PC-3 (cell line): ENCODE measurements at regions of chr19 and their contacts with region 1.

Region 1: DNA sequence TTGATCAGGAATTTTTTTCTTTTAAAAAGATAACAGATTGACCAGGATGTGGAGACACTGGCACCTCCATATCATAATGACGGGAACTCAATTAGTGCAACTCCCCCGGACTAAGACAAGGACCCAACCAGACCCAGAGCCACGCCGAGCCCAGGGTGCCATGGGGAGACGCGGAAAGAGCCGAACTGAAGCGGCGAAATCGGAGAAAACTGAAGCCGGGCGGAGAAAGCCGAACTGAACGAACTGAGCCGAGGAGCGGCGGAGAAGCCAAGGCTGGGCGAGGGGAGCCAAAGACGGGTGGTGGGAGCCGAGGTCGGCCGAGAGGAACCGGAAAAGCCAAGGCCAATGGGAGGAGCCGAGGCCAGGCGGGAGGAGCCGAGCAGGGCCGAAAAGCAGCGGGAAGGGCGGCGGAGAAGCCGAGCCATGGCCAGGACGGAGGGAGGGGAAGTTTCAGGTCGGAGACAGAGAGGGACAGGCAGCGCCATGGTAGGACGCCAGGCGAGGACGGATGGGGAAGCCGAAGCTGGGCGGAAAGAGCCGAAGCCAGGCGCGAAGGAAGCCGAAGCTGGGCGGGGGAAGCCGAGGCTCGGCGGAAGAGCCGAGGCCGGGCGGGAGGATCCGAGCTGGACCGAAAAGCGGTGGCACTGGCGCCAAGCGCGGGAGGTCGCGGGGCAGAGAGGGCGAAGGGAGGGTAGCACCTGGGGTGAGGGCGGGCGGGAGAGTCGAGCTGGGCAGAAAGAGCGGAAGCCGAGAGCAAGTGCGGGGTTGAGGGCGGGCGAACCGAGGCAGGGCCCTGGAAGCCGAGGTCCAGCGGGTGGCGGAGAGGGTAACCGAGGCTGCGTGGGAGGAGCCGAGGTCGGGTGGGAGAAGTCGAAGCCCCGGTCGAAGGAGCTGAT is 29.4 kb downstream of the ZNF557 start:
- DNase-seq: peak; percentile 95
- ATAC-seq: peak; percentile 90
- H3K4me3 ChIP-seq: peak overlapping the region; percentile 72
- H3K27ac ChIP-seq: peak overlapping the region; percentile 69
- H3K4me1 ChIP-seq: peaks cover 10% of the 10 kb centered on the region; the same call in 1 of the 2 replicates
- H3K27me3 ChIP-seq: no peaks in the 10 kb centered on the region
- CTCF ChIP-seq: no peak

Region 2: GRCh38 chr19:7137120-7137519 is 38.2 kb after region 1 on chr19:
- CTCF ChIA-PET with region 1: interaction called, 3 read pairs
- POLR2A ChIA-PET with region 1: interaction called, 5 read pairs
- intact Hi-C with region 1: loop called (anchors 1 kb)
- DNase-seq: no peak
- ATAC-seq: no peak
- H3K4me3 ChIP-seq: no peak overlapping the region
- H3K27ac ChIP-seq: no peak overlapping the region
- H3K4me1 ChIP-seq: peaks cover 41% of the 10 kb centered on the region
- H3K27me3 ChIP-seq: no peaks in the 10 kb centered on the region
- CTCF ChIP-seq: no peak

Region 3: DNA sequence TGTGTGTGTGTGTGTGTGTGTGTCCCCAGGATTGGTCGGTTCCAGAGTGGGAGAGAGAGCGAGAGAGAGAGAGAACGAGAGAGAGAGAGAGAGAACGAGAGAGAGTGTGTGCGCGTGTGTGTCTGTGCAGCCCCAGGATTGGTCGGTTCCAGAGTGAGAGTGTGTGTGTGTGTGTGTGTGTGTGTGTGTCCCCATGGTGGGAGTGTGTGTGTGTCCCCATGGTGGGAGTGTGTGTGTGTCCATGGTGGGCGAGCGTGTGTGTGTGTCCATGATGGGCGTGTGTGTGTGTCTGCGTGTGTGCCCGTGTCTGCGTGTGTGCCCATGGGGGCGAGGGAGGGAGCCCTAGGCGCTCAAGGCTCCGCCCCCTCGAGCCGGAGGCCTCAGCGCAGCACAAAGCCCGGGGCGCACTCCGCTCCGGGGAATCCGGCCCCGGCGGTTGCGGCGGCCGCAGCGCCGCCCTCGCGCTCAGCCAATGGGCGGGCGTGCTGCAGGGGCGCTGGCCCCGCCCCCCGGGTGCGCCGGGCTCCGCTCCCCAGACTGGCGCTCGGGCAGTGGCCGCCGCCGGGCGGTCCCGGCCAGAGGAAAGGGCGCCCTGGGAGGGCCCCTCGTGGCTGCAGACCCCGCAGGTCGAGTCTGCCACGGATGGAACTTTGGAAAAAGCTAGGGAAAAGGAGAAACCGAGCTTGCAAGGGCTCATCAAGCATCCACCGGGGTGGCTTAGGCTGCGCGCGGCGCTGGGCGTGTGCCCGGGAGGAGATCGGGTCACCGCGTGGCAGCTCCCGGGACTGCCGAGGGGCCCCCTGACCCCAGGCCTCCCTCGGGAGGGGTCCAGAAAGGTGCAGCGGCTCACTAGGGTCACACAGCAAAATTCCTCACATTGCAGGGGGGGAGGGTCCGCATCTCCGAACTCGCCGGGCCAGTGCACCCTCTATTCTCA is 99.1 kb after region 1 on chr19:
- CTCF ChIA-PET with region 1: no interaction called
- POLR2A ChIA-PET with region 1: no interaction called
- intact Hi-C with region 1: loop called (anchors 2 kb)
- DNase-seq: peak; percentile 98
- ATAC-seq: peak; percentile 83
- H3K4me3 ChIP-seq: peak overlapping the region; percentile 88
- H3K27ac ChIP-seq: peak overlapping the region; percentile 44
- H3K4me1 ChIP-seq: peaks cover 7% of the 10 kb centered on the region; the same call in 1 of the 2 replicates
- H3K27me3 ChIP-seq: no peaks in the 10 kb centered on the region
- CTCF ChIP-seq: no peak

Region 4: DNA sequence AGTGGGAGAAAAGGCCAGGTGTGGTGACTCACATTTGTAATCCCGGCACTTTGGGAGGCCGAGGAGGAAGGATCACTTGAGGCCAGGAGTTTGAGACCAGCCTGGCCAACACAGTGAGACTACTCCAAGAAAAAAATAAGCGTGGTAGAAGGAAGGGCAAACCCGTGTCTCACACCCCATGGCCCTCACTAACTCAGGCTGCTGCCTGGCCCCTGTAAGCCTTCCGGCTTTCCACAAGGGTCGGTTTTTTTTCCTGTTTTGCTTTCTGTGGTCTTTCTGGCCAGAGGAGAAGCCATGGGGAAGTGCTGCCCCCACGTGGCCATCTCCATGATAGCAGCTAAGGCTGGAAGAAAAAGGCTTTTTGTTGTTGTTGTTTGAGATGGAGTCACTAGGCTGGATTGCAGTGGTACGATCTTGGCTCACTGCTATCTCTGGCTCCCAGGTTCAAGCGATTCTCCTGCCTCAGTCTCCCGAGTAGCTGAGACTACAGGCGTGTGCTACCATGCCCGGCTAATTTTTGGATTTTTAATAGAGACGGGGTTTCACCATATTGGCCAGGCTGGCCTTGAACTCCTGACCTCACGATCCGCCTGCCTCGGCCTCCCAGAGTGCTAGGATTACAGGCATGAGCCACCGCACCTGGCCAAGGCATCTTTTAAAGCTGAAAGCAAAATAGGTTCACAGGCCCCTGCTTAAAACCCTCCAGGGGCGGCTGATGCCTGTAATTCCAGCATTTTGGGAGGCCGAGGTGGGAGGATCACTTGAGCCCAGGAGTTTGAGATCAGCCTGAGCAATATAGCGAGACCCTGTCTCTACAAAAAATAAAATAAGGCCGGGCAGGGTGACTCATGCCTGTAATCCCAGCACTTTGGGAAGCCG is 242.2 kb after region 1 on chr19:
- CTCF ChIA-PET with region 1: interaction called, 8 read pairs
- POLR2A ChIA-PET with region 1: no interaction called
- intact Hi-C with region 1: loop called (anchors 1 kb)
- DNase-seq: peak; percentile 92
- ATAC-seq: peak; percentile 59
- H3K4me3 ChIP-seq: peak overlapping the region; percentile 6; the same call in 1 of the 2 replicates
- H3K27ac ChIP-seq: no peak overlapping the region
- H3K4me1 ChIP-seq: 0 out of 2 replicates have a peak, but pooled peaks cover 7% of the 10 kb centered on the region
- H3K27me3 ChIP-seq: no peaks in the 10 kb centered on the region; the same call in 1 of the 2 replicates
- CTCF ChIP-seq: peak; percentile 97

Region 5: DNA sequence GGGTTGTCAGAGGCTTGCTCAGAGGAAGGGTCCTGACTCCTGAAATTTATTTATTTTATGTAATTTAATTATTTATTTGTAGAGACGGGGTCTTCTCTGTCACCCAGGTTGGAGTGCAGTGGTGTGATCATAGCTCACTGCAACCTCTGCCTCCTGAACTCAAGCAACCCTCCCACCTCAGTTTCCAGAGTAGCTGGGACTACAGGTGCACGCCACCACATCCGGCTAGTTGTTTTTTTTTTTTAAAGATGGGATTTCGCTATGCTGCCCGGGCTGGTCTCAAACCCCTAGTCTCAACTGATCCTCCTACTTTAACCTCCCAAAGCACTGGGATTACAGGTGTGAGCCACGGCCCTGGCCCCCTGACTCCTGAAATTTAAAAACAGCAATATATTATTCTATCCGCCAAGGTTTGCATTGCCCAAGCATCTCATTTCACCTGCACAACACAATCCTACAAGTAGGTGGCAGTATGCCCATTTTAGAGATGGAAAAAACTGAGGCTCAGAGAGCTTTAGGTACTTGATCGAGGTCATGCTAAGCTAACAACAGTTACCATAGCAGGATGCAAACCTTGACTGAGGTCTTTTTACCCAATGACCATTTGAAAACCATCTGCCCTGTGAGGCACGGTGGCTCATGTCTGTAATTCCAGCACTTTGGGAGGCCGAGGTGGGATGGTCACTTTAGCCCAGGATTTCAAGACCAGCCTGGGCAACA is 267.9 kb after region 1 on chr19:
- CTCF ChIA-PET with region 1: interaction called, 10 read pairs
- POLR2A ChIA-PET with region 1: no interaction called
- intact Hi-C with region 1: no loop called
- DNase-seq: peak; percentile 90
- ATAC-seq: peak; percentile 67
- H3K4me3 ChIP-seq: no peak overlapping the region
- H3K27ac ChIP-seq: no peak overlapping the region
- H3K4me1 ChIP-seq: 0 out of 2 replicates have a peak, but pooled peaks cover 4% of the 10 kb centered on the region
- H3K27me3 ChIP-seq: 0 out of 2 replicates have a peak, but pooled peaks cover 13% of the 10 kb centered on the region
- CTCF ChIP-seq: peak; percentile 77